OCI-LY7 (cell line): ENCODE measurements at regions of chr3 and their contacts with region 1.

Region 1: DNA sequence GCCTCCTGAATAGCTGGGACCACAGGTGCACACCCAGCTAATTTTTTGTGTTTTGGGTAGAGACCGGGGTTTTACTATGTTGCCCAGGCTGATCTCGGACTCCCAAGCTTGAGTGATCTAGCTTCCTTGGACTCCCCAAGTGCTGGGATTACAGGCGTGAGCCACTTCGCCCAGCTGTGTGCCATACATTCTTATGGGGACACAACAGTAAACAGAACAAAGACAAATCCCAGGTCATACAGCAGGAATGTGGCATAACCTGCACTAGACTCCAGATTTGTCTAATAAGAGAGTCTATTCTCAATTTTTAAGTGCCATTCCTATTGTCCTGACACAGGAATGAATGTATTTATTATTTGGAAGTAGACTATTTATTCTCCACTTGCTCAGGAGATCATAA is 17.6 kb downstream of the ARL6IP5 start:
- DNase-seq: no peak
- H3K4me3 ChIP-seq: no peak overlapping the region
- H3K27ac ChIP-seq: no peak overlapping the region
- H3K4me1 ChIP-seq: no peaks in the 10 kb centered on the region
- CTCF ChIP-seq: no peak

Region 2: DNA sequence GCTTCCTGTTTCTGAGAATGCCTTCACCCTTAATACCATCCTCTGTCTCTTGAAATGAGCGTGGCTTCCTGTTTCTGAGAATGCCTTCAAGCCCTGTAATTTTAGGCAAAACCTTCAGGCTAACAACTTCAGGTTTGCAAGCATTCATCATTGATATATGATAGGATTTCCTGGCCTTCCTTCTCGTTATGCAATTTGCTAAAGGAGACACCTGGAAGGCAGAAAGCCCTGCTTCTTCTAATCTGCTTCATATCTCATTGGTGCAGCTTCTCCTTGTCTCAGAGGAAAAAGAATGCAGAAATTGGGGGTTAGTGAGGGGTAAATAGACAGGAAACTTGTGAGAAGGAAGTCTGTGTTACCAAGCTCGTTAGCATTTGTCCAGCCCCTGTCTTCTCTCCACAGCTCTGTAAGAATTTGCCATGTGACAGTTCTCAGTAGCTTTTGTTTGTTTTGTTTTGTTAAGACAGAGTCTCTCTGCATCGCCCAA is 10.3 kb before region 1 on chr3:
- CTCF ChIA-PET with region 1: no interaction called
- POLR2A ChIA-PET with region 1: interaction called, 11 read pairs
- intact Hi-C with region 1: no loop called
- DNase-seq: peak; percentile 56
- H3K4me3 ChIP-seq: peak overlapping the region; percentile 42
- H3K27ac ChIP-seq: peak overlapping the region; percentile 68
- H3K4me1 ChIP-seq: peaks cover 42% of the 10 kb centered on the region
- CTCF ChIP-seq: no peak